CD8-positive, alpha-beta T cell (primary cell): ENCODE measurements at regions of chr18 and their contacts with region 1.

Region 1: DNA sequence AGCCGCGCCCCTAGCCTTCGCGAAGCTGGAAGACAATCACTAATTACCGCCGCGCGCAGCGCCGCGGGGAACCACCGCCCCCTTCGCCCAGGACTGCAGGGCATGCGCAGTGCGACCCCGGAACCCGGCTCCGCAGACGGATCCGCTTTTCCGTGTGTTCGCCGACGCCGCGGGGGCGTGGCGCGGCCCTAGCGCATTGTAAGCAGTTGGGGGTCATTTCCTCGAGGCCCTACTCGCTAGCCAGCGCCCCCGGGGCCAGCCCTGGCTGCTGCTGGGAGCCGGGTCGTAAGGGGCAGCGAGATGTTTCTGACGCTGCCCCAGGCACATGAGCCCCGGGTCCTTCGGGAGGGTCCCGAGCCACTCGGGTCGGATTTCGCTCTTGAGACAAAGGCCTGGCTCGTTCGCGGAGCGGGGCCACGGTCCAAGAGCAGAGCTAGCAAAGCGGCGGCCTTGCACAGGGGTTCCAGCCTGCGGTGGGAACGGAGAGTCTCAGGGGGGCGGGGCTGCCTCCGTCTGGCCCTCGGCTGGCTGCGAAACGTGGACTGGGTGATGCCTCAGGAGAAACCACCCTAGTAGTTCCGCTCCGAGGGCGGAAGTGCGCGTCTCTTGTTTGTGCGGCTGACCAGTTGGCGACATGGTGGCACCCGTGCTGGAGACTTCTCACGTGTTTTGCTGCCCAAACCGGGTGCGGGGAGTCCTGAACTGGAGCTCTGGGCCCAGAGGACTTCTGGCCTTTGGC is at the starts of genes ELP2 and SLC39A6:
- DNase-seq: peak; percentile 88 to 98 (median 96)
- ATAC-seq: peak; percentile 87
- H3K4me3 ChIP-seq: peak within 1 kb of the TSS; percentile 97 to 100
- H3K4me3 Mint-ChIP-seq: peak within 1 kb of the TSS; percentile 95
- H3K27ac ChIP-seq: peak within 1 kb of the TSS; percentile 94 to 98
- H3K27ac Mint-ChIP-seq: peak within 1 kb of the TSS; percentile 98
- H3K4me1 ChIP-seq: peaks cover 47% of the 10 kb centered on the region
- H3K4me1 Mint-ChIP-seq: peaks cover 68% of the 10 kb centered on the region
- H3K27me3 ChIP-seq: no peaks in the 10 kb centered on the region
- H3K27me3 Mint-ChIP-seq: no peaks in the 10 kb centered on the region
- CTCF ChIP-seq: no peak
- total RNA-seq, gene ELP2: 212 to 222 TPM
- total RNA-seq, gene SLC39A6: 12.3 to 14.4 TPM

Region 2: DNA sequence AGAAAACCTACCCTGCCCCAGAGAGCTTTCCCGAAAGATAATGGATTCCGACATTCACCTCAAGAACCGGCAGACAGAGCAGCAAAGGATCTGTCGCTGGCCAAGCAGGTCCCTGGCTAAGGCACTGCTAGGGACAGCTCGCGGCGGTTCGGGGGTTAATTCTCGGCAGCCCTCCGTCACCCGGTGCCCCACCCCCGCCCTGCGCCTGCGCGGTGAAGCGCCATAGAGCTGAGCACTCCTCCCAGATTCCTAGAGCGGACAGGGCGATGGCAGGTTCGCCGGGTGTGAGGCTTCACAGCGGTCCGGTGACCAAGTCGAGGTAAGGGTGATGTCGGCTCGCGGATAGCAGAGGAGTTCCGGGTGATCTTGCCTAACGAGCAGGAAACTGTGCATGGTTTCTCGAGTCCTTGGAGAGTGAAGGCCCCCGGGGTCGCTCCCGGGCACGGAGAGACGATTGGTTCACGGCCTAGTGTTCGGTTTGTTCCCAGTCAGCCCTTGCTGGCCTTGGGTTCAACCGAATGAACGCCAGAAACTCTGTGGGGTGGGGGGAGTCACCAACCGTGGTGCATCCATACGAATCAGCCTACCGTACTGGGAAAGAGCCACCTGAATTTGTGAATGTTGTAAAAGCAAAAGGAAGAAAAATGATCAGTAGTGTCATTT is 839.3 kb before region 1 on chr18 and contains the start of gene ZSCAN30:
- CTCF ChIA-PET with region 1: no interaction called
- POLR2A ChIA-PET with region 1: no interaction called
- intact Hi-C with region 1: loop called in 1 of 2 experiments (anchors 5 kb)
- DNase-seq: peak; percentile 92 to 98 (median 96)
- ATAC-seq: peak; percentile 94
- H3K4me3 ChIP-seq: peak within 1 kb of the TSS; percentile 78 to 82
- H3K4me3 Mint-ChIP-seq: peak within 1 kb of the TSS; percentile 99
- H3K27ac ChIP-seq: peak within 1 kb of the TSS; percentile 69 to 85
- H3K27ac Mint-ChIP-seq: peak within 1 kb of the TSS; percentile 99
- H3K4me1 ChIP-seq: peaks cover 17% of the 10 kb centered on the region
- H3K4me1 Mint-ChIP-seq: peaks cover 70% of the 10 kb centered on the region
- H3K27me3 ChIP-seq: no peaks in the 10 kb centered on the region
- H3K27me3 Mint-ChIP-seq: no peaks in the 10 kb centered on the region
- CTCF ChIP-seq: no peak
- total RNA-seq, gene ZSCAN30: 6.2 to 6.3 TPM

Region 3: GRCh38 chr18:35972197-35973052 is 157.0 kb before region 1 on chr18 and contains the start of gene RMP24:
- CTCF ChIA-PET with region 1: no interaction called
- POLR2A ChIA-PET with region 1: interaction called, 10 read pairs
- intact Hi-C with region 1: loop called (anchors 1 kb)
- DNase-seq: peak; percentile 88 to 97 (median 93)
- ATAC-seq: peak; percentile 84
- H3K4me3 ChIP-seq: peak within 1 kb of the TSS; percentile 60 to 89
- H3K4me3 Mint-ChIP-seq: peak within 1 kb of the TSS; percentile 94
- H3K27ac ChIP-seq: peak within 1 kb of the TSS; percentile 57 to 90
- H3K27ac Mint-ChIP-seq: peak within 1 kb of the TSS; percentile 98
- H3K4me1 ChIP-seq: peaks cover 35% of the 10 kb centered on the region
- H3K4me1 Mint-ChIP-seq: peaks cover 65% of the 10 kb centered on the region
- H3K27me3 ChIP-seq: no peaks in the 10 kb centered on the region
- H3K27me3 Mint-ChIP-seq: no peaks in the 10 kb centered on the region
- CTCF ChIP-seq: no peak

Region 4: DNA sequence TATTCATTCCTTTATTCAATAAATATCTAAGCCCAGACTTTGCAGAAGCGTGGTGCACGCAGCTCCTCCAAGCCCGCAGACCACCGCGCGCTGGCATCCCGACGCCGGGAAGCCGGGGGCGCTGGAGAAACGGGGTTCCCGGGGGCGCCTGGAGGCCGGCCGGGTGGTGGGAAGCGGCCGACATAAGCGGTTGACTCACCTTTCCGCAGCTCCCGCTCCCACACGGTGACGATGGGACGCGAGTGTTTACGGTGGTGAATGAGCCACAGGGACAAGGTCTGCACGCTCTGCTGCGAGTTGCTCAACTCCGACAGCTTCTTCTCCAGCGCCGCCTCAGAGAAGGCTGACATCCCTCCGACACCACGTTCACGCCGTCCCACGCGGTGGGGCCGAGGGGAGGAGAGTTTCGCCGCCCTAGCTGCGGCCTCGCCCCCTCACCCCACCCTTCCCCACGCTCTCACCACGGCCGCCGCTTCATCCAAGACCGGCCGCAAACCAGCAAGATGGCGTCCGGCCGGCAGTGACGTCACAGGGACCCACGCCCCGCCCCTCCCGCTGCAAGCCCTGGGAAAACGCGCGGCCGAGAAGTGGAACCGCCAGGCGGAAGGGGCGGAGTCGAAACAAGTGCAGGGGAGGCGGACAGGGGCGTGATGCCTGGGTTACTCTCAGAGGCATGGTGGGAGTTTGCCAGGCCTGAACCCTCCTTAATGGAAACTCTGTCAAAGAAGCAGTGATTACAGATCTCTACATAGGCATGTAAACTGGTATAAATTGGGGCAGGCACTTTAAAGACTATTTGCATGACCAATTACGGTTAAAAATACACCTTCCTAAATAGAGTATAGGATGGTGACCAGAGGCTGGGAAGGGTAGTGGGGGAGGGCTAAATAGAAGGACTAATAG is 62.2 kb before region 1 on chr18 and contains the start of gene RPRD1A:
- CTCF ChIA-PET with region 1: no interaction called
- POLR2A ChIA-PET with region 1: interaction called, 16 read pairs
- intact Hi-C with region 1: loop called (anchors 1 kb)
- DNase-seq: peak; percentile 92 to 99 (median 97)
- ATAC-seq: peak; percentile 93
- H3K4me3 ChIP-seq: peak within 1 kb of the TSS; percentile 95 to 98
- H3K4me3 Mint-ChIP-seq: peak within 1 kb of the TSS; percentile 94
- H3K27ac ChIP-seq: peak within 1 kb of the TSS; percentile 88 to 89
- H3K27ac Mint-ChIP-seq: peak within 1 kb of the TSS; percentile 96
- H3K4me1 ChIP-seq: peaks cover 29% of the 10 kb centered on the region
- H3K4me1 Mint-ChIP-seq: peaks cover 46% of the 10 kb centered on the region
- H3K27me3 ChIP-seq: no peaks in the 10 kb centered on the region
- H3K27me3 Mint-ChIP-seq: peaks cover 3% of the 10 kb centered on the region
- CTCF ChIP-seq: no peak
- total RNA-seq, gene RPRD1A: 13.8 to 15.8 TPM

Region 5: DNA sequence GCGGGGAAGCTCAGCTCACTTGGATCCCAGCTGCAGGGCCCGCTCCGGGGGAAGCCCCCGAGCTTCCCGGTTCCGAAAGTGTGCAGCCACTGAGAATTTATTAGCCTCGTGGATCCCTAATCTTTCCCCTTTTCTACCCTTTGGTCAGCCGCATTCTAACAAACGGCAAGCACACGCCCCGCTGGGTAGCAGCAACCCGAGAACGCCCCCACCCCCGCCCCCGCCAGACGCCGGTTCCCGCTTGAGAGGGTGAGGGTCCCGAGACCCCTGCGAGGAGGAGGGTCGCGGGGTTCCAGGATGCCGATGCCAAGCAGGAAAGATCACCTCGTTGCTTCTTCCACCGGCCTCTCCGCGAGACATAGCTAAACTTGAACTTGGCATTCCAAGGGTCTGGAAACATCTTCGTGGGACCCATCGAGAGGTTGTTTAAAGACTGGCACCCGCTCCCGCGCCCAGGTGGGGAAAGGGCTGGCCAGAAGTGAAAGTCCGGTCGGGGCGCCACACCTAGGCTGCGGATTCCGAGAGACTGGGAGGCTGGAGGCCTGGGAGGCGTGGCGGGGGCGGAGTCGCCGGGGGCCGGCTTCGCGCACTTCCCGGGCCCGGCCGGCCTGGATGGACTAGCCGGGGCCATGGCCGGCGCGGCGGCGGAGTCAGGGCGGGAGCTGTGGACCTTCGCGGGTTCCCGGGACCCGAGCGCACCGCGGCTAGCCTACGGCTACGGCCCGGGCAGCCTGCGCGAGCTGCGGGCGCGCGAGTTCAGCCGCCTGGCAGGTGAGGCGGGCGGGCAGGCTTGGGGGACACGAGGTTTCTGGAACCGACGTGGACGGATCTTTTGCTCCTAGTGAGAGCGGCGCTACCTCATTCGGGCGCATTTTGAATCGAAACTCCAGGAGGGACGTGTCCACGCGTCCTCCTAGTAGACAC is 57.7 kb after region 1 on chr18 and contains the start of gene MOCOS:
- CTCF ChIA-PET with region 1: no interaction called
- POLR2A ChIA-PET with region 1: interaction called, 3 read pairs
- intact Hi-C with region 1: loop called in 1 of 2 experiments (anchors 2 kb)
- DNase-seq: peak in 6 of 9 experiments; percentile 14 to 63 (median 44)
- ATAC-seq: peak; percentile 65
- H3K4me3 ChIP-seq: peak within 1 kb of the TSS; percentile 66 to 75
- H3K4me3 Mint-ChIP-seq: peak within 1 kb of the TSS; percentile 81
- H3K27ac ChIP-seq: no peak within 1 kb of the TSS
- H3K27ac Mint-ChIP-seq: no peak within 1 kb of the TSS
- H3K4me1 ChIP-seq: peaks cover 11% of the 10 kb centered on the region
- H3K4me1 Mint-ChIP-seq: peaks cover 8% of the 10 kb centered on the region
- H3K27me3 ChIP-seq: peaks cover 7 to 8% of the 10 kb centered on the region in 2 experiments
- H3K27me3 Mint-ChIP-seq: peaks cover 25% of the 10 kb centered on the region
- CTCF ChIP-seq: no peak
- total RNA-seq, gene MOCOS: not detected